Heart left ventricle (tissue), 16 donors: ENCODE measurements at regions of chr5 and their contacts with region 1.

Region 1: DNA sequence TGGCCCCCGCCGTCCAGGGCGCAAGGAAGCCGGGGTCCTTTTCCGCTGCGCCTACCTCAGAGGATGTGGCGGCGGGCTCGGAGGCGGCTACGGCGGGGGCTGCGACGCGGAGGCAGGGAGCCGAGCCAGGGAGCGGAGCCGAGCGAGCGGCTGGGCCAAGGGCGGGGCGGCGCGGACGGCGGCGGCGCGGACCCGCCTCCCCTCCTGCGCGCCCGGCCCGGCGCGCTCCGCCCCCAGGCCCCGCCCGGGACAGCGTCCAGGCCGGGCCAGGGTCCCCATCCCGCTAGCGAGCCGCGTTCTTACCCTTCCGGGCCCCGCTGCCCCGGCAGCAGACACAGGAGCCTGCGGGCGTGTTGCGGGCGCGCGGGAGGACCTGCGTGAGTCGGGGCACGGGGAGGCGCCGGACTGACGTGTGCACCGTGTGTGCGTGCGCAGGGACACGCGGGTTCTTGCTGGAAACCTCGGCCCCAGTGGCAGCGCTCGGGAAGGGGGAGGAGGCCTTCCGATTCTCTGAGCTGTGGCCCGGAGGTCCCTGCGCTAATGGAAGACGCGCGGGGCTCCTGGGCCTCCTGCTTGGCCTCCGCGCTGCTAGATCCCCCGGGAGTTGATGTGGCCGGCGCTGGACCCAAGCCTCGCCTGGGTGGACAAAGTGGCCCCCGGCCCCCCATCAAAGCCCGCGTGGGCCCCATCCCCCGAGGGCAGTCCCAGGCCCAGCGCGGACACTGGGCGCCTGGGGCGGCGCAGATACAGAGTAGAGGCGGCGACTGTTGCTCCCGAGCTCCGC is at the start of gene VDAC1:
- DNase-seq: peak; percentile 84 to 91 (median 88)
- ATAC-seq: peak; percentile 71 to 90 (median 86)
- H3K4me3 ChIP-seq: peak within 1 kb of the TSS; percentile 61 to 99 (median 90)
- H3K27ac ChIP-seq: peak within 1 kb of the TSS; percentile 94 to 100 (median 100)
- H3K4me1 ChIP-seq: peaks cover 7 to 53% (median 48%) of the 10 kb centered on the region in 12 donors
- H3K27me3 ChIP-seq: no peaks in the 10 kb centered on the region
- CTCF ChIP-seq: peak in 1 of 12 donors; percentile 24
- POLR2A ChIP-seq: peak in 1 of 2 donors; percentile 77
- total RNA-seq, gene VDAC1: 379 to 596 (median 548) TPM

Region 2: DNA sequence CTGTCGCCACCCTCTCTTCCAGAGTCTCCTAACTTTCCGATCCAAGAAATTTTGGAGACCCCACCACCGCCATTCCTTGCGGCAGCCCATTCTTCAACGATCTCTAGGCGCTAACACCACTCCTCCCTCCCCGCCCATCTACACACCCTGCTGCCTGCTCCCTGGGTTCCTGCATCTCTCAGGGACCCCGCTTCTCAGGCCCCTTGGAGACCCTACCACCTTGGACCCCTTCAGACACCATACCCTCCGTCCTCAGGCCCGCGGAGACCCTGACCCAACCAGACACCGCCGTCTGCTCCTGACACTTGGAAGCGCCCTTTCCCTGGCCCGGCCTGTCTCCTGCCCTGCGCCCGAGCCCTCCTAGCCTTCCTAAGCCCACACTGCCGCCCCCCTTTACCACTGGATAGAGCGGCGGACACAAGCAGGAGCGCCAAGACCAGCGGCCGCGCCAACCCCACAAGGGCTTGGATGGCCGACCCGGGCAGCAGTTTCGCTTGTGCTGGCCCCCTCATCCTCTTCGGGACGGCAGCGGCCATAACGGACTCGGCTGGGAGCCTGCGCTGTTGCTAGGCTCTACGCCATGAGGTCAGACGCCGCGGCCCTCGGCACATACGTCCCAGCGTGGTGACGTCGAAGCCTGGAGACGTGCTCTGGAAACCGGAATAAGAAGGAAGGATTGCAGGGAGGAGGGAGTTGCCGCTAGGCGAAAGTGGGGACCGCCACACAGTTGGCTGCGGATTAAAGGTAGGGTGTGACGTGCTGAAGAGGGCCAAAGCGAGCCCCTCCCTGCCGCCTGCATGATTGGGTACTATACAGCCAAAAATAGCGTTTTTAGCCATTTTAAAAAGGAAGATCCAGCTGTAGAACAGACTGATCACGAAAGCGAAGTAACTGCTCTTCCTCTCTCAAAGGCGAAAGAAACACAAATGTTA is 36.5 kb before region 1 on chr5 and contains the start of gene C5orf15:
- intact Hi-C with region 1: loop called in 1 of 10 experiments (anchors 5 kb)
- DNase-seq: peak; percentile 95 to 98 (median 97)
- ATAC-seq: peak; percentile 98 to 99 (median 98)
- H3K4me3 ChIP-seq: peak within 1 kb of the TSS; percentile 70 to 96 (median 84)
- H3K27ac ChIP-seq: peak within 1 kb of the TSS; percentile 88 to 98 (median 94)
- H3K4me1 ChIP-seq: peaks cover 0 to 38% (median 28%) of the 10 kb centered on the region in 12 donors
- H3K27me3 ChIP-seq: no peaks in the 10 kb centered on the region
- CTCF ChIP-seq: peak in 8 of 12 donors; percentile 10 to 37 (median 24)
- POLR2A ChIP-seq: peak; percentile 73 to 93
- total RNA-seq, gene C5orf15: 30.9 to 68.6 (median 37.1) TPM

Region 3: DNA sequence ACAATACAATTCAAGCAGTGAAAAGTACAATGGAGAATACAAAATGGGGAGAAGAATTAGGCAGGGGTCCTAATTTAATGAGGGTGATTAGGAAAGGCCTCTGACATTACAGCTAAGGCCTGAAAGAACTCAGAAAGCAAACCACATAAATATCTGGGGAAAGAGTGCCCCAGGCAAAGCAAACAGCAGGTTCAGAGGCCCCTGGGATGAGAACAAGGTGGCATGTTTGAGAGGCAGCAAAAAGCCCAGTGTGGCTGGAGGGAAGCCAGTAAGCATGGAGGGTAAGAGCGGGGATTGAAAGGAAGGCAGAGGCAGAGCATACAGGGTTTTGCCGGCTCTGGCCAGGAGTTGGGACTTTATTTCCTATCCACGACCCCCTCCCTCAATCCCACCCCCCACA is 33.4 kb after region 1 on chr5:
- intact Hi-C with region 1: no loop called
- DNase-seq: no peak
- ATAC-seq: no peak
- H3K4me3 ChIP-seq: no peak overlapping the region
- H3K27ac ChIP-seq: no peak overlapping the region
- H3K4me1 ChIP-seq: no peaks in the 10 kb centered on the region
- H3K27me3 ChIP-seq: no peaks in the 10 kb centered on the region
- CTCF ChIP-seq: no peak
- POLR2A ChIP-seq: no peak